Transverse colon (tissue), 4 donors: ENCODE measurements at regions of chr7 and their contacts with region 1.

Region 1: DNA sequence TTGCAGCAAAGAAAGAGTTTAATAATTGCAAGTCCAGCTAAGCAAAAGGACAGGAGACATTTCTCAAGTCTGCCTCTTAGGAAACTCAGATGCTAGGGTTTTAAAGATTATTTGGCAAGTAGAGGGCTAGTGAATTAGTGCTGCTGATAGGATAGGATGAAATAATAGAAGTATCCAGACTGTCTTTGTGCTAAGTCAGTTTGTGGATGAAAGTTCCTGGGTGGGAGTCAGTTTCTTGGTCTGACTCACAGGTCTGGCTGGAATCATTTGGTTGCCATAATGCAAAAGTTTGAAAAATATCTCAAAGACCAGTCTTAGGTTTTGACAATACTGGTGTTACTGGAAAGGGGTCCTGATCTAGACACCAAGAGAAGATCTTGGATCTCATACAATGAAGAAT is 42.6 kb upstream of the INHBA start:
- DNase-seq: no peak
- H3K4me3 ChIP-seq: no peak overlapping the region
- H3K27ac ChIP-seq: no peak overlapping the region
- H3K4me1 ChIP-seq: no peaks in the 10 kb centered on the region
- H3K27me3 ChIP-seq: no peaks in the 10 kb centered on the region
- CTCF ChIP-seq: no peak
- EP300 ChIP-seq: no peak
- POLR2A ChIP-seq: no peak

Region 2: DNA sequence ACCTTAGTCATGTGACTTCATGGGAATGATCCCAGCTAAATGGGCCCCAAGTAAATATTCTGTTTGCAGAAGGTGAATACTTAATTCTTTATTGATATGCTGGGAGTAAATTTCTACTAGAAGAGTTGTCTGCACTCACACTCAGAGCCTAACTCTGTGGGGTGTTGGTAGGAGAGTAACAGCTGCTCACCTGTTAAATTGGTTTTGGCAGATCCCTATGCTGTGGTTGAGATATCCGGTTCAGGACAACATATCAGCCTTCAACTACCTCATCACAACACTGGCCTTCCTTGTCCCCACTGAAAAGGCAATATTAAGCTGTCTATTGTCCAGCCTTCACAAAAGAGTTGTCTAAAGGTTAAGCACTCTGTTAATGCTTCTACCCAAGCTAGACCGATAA is 780.8 kb before region 1 on chr7:
- in situ Hi-C with region 1: no loop called
- intact Hi-C with region 1: loop called (anchors 5 kb)
- DNase-seq: no peak
- H3K4me3 ChIP-seq: no peak overlapping the region
- H3K27ac ChIP-seq: no peak overlapping the region
- H3K4me1 ChIP-seq: no peaks in the 10 kb centered on the region
- H3K27me3 ChIP-seq: no peaks in the 10 kb centered on the region
- CTCF ChIP-seq: no peak
- EP300 ChIP-seq: no peak
- POLR2A ChIP-seq: no peak

Region 3: DNA sequence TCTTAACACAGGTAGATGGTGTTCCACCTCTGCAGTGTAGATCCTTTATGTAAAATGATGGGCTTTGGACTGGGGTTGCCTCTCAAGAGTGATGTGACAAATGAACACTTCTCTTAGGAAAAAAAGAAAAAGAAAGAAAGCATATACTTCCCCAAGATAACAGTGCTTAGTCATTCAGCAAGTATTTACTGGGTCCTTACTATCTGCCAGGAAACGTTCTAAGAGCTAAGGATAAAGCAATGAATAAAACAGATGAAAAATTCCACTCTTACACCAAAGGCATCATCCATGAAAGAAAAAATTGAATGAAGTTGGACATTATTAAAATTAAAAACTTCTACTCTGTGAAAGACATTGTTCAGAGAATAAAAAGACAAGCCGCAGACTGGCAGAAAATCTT is 989.1 kb after region 1 on chr7:
- in situ Hi-C with region 1: no loop called
- intact Hi-C with region 1: loop called (anchors 5 kb)
- DNase-seq: no peak
- H3K4me3 ChIP-seq: no peak overlapping the region
- H3K27ac ChIP-seq: no peak overlapping the region
- H3K4me1 ChIP-seq: no peaks in the 10 kb centered on the region
- H3K27me3 ChIP-seq: no peaks in the 10 kb centered on the region
- CTCF ChIP-seq: no peak
- EP300 ChIP-seq: no peak
- POLR2A ChIP-seq: no peak